Heart right ventricle (tissue), 16 donors: ENCODE measurements at regions of chr1 and their contacts with region 1.

Region 1: DNA sequence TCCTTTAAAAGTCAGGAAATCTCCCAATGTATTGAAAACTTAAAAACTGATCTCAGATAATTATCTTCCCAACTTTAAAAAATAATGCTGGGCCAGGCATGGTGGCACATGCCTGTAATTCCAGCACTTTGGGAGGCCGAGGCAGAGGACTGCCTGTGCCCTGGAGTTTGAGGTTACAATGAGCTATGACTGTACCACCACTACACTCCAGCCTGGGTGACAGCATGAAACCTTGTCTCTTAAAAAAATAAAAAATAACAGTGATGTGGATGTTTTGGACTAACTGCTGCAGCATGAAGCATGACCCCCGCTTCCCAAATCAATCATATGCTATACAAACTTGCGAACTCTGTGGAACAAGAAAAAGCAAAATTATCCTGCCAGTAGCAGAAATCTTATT is 186.3 kb downstream of the RERE start:
- DNase-seq: no peak
- ATAC-seq: peak in 2 of 8 donors; percentile 53 to 72
- H3K4me3 ChIP-seq: no peak overlapping the region
- H3K27ac ChIP-seq: peak overlapping the region in 5 of 10 donors; percentile 9 to 70 (median 38)
- H3K4me1 ChIP-seq: peaks cover 5 to 62% (median 52%) of the 10 kb centered on the region in 9 donors
- H3K27me3 ChIP-seq: no peaks in the 10 kb centered on the region
- CTCF ChIP-seq: no peak

Region 2: DNA sequence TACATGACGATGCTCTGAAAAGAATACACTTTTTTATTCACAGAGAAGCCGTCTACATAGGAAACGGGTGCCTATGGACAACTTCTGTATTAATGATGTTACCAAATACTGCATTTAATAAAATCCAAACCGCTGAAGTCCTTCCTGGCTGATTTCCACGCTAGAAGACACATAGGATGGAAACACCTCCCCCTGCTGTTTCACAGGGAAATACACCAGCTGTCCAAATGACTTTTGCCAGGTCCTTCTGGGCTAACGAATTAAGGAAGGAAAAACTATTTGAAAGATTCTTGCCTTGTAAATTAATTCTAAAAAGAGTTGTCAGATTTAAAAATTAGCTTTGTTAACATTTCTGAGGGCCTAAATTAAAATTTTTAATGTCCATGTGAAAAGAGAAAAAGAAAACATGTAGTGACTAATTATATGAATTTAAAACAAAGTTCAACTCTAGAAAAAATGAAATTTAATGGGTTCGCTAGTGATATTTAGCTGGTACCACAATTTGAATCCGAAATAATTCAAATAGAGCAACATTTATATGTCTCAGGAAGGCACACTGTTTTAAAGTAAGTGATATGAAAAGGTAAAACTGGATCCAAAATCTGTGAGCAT is 40.2 kb after region 1 on chr1:
- intact Hi-C with region 1: loop called in 1 of 10 experiments (anchors 1 kb)
- DNase-seq: peak in 1 of 2 donors; percentile 69
- ATAC-seq: peak in 6 of 8 donors; percentile 62 to 80 (median 75)
- H3K4me3 ChIP-seq: peak overlapping the region in 1 of 10 donors; percentile 10
- H3K27ac ChIP-seq: peak overlapping the region in 3 of 10 donors; percentile 19 to 42 (median 30)
- H3K4me1 ChIP-seq: peaks cover 6 to 73% (median 52%) of the 10 kb centered on the region in 9 donors
- H3K27me3 ChIP-seq: no peaks in the 10 kb centered on the region
- CTCF ChIP-seq: peak; percentile 53 to 93 (median 85)